ENCODE measurements at regions of chr12 and their contacts with region 1.

Region 1: DNA sequence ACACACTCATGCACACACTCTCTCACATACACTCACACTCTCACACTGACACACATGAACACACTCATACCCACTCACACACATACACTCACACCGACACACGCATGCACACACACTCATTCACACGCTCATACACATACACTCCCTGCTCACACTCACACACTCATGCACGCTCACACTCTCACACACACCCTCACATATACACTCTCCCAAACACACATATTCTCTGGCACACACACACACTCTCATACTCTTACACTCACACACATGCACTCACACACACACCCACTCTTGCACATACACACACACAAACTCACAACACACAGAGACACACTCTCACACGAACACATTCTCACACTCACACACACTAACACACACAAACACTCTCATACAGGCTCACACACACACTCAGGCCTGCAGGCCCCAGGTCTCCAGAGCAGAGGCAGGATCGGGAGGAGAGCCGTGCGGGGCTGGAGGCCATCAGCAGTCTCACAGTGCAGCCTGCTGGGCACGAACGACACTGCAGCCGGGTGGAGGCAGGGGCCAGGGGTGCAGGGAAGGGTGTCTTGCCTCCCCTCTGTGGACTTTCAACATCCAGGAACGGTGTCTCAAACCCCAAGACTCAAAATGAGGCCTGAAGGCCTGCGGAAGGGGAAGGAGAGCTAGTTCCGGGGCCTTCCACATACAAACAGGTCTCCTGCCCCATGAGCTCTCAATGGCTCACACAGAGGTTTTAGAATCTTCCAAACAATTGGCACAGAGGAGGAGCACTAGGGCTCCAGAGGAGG is 148.7 kb downstream of the ANO2 start:
- DNase-seq: peak; percentile 17 to 28
- ATAC-seq: peak; percentile 51 to 94; a peak in 4 of 6 replicates
- H3K4me3 ChIP-seq: no peak overlapping the region
- H3K27ac ChIP-seq: no peak overlapping the region
- H3K4me1 ChIP-seq: no peaks in the 10 kb centered on the region
- CTCF ChIP-seq: peak; percentile 30
- EP300 ChIP-seq: no peak
- POLR2A ChIP-seq: no peak
- RAD21 ChIP-seq: peak; percentile 55 to 83

Region 2: GRCh38 chr12:5806371-5807089 is 10.2 kb after region 1 on chr12:
- CTCF ChIA-PET with region 1: interaction called, 12 read pairs
- POLR2A ChIA-PET with region 1: no interaction called
- DNase-seq: no peak
- ATAC-seq: no peak
- H3K4me3 ChIP-seq: no peak overlapping the region
- H3K27ac ChIP-seq: no peak overlapping the region
- H3K4me1 ChIP-seq: no peaks in the 10 kb centered on the region
- CTCF ChIP-seq: no peak
- EP300 ChIP-seq: no peak
- POLR2A ChIP-seq: no peak
- RAD21 ChIP-seq: no peak